Activated B cell treated with CpG ODN at 0.5 μM for 24 hours (primary cell): ENCODE measurements at regions of chr14 and their contacts with region 1.

Region 1: GRCh38 chr14:80987235-80988032 is 32.0 kb downstream of the TSHR start:
- DNase-seq: no peak
- ATAC-seq: peak; percentile 64
- H3K4me3 Mint-ChIP-seq: no peak overlapping the region
- H3K27ac Mint-ChIP-seq: no peak overlapping the region
- H3K4me1 Mint-ChIP-seq: peaks cover 4% of the 10 kb centered on the region
- H3K27me3 Mint-ChIP-seq: peaks cover 8% of the 10 kb centered on the region
- CTCF ChIP-seq: peak; percentile 82

Region 2: GRCh38 chr14:80055667-80056496 is 931.6 kb before region 1 on chr14:
- CTCF ChIA-PET with region 1: no interaction called
- POLR2A ChIA-PET with region 1: no interaction called
- intact Hi-C with region 1: loop called (anchors 5 kb)
- DNase-seq: no peak
- ATAC-seq: no peak
- H3K4me3 Mint-ChIP-seq: no peak overlapping the region
- H3K27ac Mint-ChIP-seq: no peak overlapping the region
- H3K4me1 Mint-ChIP-seq: no peaks in the 10 kb centered on the region
- H3K27me3 Mint-ChIP-seq: no peaks in the 10 kb centered on the region
- CTCF ChIP-seq: no peak

Region 3: GRCh38 chr14:80941241-80942182 is 45.9 kb before region 1 on chr14 and contains the start of gene CEP128:
- CTCF ChIA-PET with region 1: interaction called, 11 read pairs
- POLR2A ChIA-PET with region 1: no interaction called
- intact Hi-C with region 1: no loop called
- DNase-seq: peak; percentile 70
- ATAC-seq: peak; percentile 95
- H3K4me3 Mint-ChIP-seq: peak within 1 kb of the TSS; percentile 90
- H3K27ac Mint-ChIP-seq: peak within 1 kb of the TSS; percentile 70
- H3K4me1 Mint-ChIP-seq: peaks cover 32% of the 10 kb centered on the region
- H3K27me3 Mint-ChIP-seq: peaks cover 3% of the 10 kb centered on the region
- CTCF ChIP-seq: no peak
- total RNA-seq, gene CEP128: 21.1 and 25.0 TPM in 2 replicates

Region 4: DNA sequence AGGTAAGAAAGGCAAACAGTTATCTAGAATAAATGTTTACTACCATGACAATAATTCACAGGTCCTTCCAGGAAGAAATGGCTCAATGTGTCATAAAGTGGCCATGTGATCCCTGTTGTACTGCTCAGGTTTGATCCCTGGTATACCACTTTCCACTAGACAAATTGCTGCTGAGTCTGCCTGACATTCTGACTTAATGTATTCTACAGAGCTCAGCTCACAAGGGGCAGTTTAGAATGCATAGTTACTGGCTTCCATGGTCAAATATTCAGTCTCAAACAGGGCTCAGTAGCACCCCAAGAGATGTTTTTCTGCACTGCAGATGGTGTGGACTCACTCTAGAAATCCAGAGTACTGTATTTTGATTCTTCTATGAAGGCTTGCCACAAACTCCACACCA is 10.2 kb before region 1 on chr14:
- CTCF ChIA-PET with region 1: interaction called, 14 read pairs
- POLR2A ChIA-PET with region 1: no interaction called
- intact Hi-C with region 1: no loop called
- DNase-seq: no peak
- ATAC-seq: no peak
- H3K4me3 Mint-ChIP-seq: no peak overlapping the region
- H3K27ac Mint-ChIP-seq: no peak overlapping the region
- H3K4me1 Mint-ChIP-seq: no peaks in the 10 kb centered on the region
- H3K27me3 Mint-ChIP-seq: peaks cover 6% of the 10 kb centered on the region
- CTCF ChIP-seq: no peak

Region 5: DNA sequence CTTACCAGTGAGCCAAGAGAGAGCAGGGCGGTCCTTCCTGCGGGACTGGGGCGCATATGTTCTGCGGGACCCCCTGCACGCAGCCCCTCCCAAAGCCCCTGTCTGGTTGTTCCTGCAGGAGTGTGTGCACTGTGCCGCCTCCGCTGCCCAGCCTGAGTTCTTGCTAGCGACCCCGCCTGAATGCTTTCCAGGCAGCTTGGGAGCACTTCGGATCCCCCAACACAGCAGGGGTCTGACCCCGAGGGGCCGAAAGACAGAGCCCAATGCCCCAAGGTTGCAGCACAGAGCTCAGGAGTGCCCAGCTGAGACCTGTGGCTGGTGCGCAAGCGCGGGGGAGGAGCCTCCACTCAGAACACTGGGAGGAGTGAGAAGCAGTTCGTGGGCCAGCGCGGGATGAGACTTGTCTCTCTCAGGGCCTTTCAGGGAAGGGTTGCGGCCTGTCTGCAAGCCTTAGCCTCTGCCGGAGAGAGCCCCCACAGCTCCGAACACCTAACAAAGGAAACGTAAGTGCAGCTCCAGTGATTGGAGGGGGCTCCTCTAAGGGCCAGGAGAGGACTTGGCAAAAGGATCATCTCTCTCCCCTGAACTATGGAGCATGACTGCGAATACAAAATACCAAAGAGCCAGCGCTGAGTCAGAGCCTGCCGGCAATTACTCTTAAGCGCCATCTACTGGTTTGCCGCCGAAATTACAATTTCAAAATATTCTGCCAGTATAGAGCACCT is 182.8 kb after region 1 on chr14:
- CTCF ChIA-PET with region 1: interaction called, 14 read pairs
- POLR2A ChIA-PET with region 1: interaction called, 3 read pairs
- intact Hi-C with region 1: loop called (anchors 1 kb)
- DNase-seq: peak; percentile 79
- ATAC-seq: peak; percentile 98
- H3K4me3 Mint-ChIP-seq: peak overlapping the region; percentile 90
- H3K27ac Mint-ChIP-seq: peak overlapping the region; percentile 97
- H3K4me1 Mint-ChIP-seq: peaks cover 42% of the 10 kb centered on the region
- H3K27me3 Mint-ChIP-seq: no peaks in the 10 kb centered on the region
- CTCF ChIP-seq: peak; percentile 49

Region 6: GRCh38 chr14:81220830-81221578 is 233.6 kb after region 1 on chr14 and contains the start of gene GTF2A1:
- CTCF ChIA-PET with region 1: interaction called, 3 read pairs
- POLR2A ChIA-PET with region 1: interaction called, 17 read pairs
- intact Hi-C with region 1: no loop called
- DNase-seq: peak; percentile 92
- ATAC-seq: peak; percentile 70
- H3K4me3 Mint-ChIP-seq: peak within 1 kb of the TSS; percentile 98
- H3K27ac Mint-ChIP-seq: peak within 1 kb of the TSS; percentile 100
- H3K4me1 Mint-ChIP-seq: peaks cover 35% of the 10 kb centered on the region
- H3K27me3 Mint-ChIP-seq: no peaks in the 10 kb centered on the region
- CTCF ChIP-seq: no peak
- total RNA-seq, gene GTF2A1: 38.5 and 40.9 TPM in 2 replicates